Activated CD4-positive, alpha-beta T cell treated with anti-CD3 and anti-CD28 coated beads for 36 hours (primary cell): ENCODE measurements at regions of chr12 and their contacts with region 1.

Region 1: GRCh38 chr12:71626098-71626497 is 37.5 kb downstream of the ZFC3H1 start:
- DNase-seq: no peak
- ATAC-seq: no peak
- H3K4me3 Mint-ChIP-seq: no peak overlapping the region
- H3K27ac Mint-ChIP-seq: peak overlapping the region; percentile 15
- H3K4me1 Mint-ChIP-seq: peaks cover 17% of the 10 kb centered on the region
- H3K27me3 Mint-ChIP-seq: no peaks in the 10 kb centered on the region

Region 2: GRCh38 chr12:71636704-71637115 is 10.6 kb after region 1 on chr12:
- CTCF ChIA-PET with region 1: interaction called, 51 read pairs
- POLR2A ChIA-PET with region 1: no interaction called
- intact Hi-C with region 1: no loop called
- DNase-seq: no peak
- ATAC-seq: peak; percentile 43
- H3K4me3 Mint-ChIP-seq: no peak overlapping the region
- H3K27ac Mint-ChIP-seq: peak overlapping the region; percentile 73
- H3K4me1 Mint-ChIP-seq: peaks cover 21% of the 10 kb centered on the region
- H3K27me3 Mint-ChIP-seq: no peaks in the 10 kb centered on the region